ENCODE measurements at regions of chr7 and their contacts with region 1.

Region 1: DNA sequence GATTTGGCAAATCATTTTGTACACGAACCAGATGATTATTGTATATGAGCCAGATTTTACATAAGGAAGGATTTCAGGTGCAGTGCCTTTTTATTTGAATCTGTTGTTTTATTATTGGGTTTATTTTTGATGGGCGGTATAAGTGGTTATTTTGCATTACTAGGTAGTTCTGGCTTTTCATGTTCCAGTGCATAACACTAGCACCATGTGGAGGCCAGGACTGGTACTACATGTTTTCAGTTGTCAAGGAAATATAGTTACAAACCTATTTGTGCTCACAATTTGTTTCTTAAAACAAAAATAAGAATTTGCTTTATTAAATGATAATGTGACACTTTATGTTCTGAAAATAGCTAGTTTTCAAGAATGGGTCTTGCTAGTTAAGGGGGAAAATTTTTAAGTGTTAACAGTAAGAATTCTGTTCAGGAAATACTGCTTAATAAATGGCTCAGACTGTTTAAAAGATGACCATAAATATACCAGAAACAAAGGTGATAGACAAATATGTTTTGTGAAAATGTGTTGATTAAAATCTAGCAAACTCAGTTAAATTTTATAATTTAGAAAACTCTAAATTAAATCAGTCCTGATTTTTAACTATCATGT is 7.1 kb upstream of the SEMA3E start:
- DNase-seq: peak in 1 of 2 experiments; percentile 40
- H3K4me3 ChIP-seq: no peak overlapping the region
- H3K27ac ChIP-seq: no peak overlapping the region
- H3K4me1 ChIP-seq: no peaks in the 10 kb centered on the region
- H3K27me3 ChIP-seq: no peaks in the 10 kb centered on the region
- CTCF ChIP-seq: peak; percentile 89

Region 2: DNA sequence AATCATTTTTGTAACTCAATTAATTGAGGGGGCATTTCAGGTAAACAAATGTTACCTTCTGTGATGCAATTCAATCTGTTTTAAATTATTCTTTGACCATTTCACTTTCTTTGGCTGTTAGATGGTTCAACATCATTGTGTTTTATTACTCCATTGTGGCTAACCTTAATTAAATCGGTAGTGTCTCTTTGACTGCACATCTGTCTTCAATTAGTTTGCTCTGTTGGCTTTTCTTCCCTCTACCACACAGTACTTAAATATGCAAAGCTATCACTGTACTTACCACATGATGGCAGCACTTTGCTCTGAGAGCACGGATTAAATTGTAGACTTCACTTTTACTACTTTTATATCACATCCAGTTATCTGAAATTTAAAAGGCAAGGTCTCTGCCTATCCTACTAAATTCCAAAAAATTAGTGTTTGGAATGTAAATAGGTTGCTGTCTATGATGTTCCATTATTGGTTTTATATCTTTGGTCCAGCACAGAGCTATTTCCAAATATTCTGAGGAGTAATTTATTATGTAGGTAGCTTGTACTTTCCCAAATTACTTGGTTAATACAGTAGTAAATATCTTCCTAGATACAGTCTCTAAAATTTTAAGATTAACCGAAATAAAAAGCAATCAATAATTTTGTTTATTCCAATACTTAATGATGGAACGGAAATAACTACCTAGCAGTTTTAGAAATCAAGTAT is 845.3 kb before region 1 on chr7:
- CTCF ChIA-PET with region 1: no interaction called
- POLR2A ChIA-PET with region 1: no interaction called
- intact Hi-C with region 1: loop called (anchors 2 kb)
- DNase-seq: peak in 1 of 2 experiments; percentile 9
- H3K4me3 ChIP-seq: no peak overlapping the region
- H3K27ac ChIP-seq: no peak overlapping the region
- H3K4me1 ChIP-seq: 0 out of 2 replicates have a peak, but pooled peaks cover 3% of the 10 kb centered on the region
- H3K27me3 ChIP-seq: no peaks in the 10 kb centered on the region
- CTCF ChIP-seq: peak; percentile 79

Region 3: GRCh38 chr7:83410989-83411591 is 245.0 kb before region 1 on chr7:
- CTCF ChIA-PET with region 1: no interaction called
- POLR2A ChIA-PET with region 1: no interaction called
- intact Hi-C with region 1: loop called (anchors 1 kb)
- DNase-seq: peak in 1 of 2 experiments; percentile 40
- H3K4me3 ChIP-seq: no peak overlapping the region
- H3K27ac ChIP-seq: no peak overlapping the region
- H3K4me1 ChIP-seq: no peaks in the 10 kb centered on the region
- H3K27me3 ChIP-seq: no peaks in the 10 kb centered on the region
- CTCF ChIP-seq: peak; percentile 83

Region 4: DNA sequence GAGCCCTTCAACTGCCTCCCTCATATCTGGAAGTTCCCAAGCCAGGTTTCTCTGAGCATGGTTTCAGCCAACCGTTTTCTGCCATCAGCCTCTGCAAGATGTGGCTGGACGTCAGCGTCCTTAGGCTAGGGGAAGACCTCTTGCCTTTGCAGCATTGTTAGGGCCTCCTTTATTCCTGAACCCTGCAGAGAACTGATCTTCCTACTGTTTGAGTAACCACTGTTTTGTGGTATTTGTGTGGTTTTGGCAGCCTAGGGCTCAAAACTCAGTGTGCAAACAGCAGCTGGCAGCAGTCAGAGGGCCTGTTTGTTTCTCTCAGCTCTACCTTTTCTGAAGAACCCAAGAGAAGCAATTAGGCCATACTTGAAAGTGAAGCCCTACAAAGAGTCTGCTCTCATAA is 76.3 kb after region 1 on chr7:
- CTCF ChIA-PET with region 1: no interaction called
- POLR2A ChIA-PET with region 1: no interaction called
- intact Hi-C with region 1: loop called (anchors 5 kb)
- DNase-seq: no peak
- H3K4me3 ChIP-seq: no peak overlapping the region
- H3K27ac ChIP-seq: no peak overlapping the region
- H3K4me1 ChIP-seq: no peaks in the 10 kb centered on the region
- H3K27me3 ChIP-seq: no peaks in the 10 kb centered on the region
- CTCF ChIP-seq: no peak

Region 5: GRCh38 chr7:85023045-85023712 is 1367.1 kb after region 1 on chr7:
- CTCF ChIA-PET with region 1: no interaction called
- POLR2A ChIA-PET with region 1: no interaction called
- intact Hi-C with region 1: loop called (anchors 10 kb)
- DNase-seq: peak in 1 of 2 experiments; percentile 20
- H3K4me3 ChIP-seq: no peak overlapping the region
- H3K27ac ChIP-seq: no peak overlapping the region
- H3K4me1 ChIP-seq: no peaks in the 10 kb centered on the region; the same call in 1 of the 2 replicates
- H3K27me3 ChIP-seq: no peaks in the 10 kb centered on the region
- CTCF ChIP-seq: peak; percentile 87